PC-9 (cell line): ENCODE measurements at regions of chr3 and their contacts with region 1.

Region 1: DNA sequence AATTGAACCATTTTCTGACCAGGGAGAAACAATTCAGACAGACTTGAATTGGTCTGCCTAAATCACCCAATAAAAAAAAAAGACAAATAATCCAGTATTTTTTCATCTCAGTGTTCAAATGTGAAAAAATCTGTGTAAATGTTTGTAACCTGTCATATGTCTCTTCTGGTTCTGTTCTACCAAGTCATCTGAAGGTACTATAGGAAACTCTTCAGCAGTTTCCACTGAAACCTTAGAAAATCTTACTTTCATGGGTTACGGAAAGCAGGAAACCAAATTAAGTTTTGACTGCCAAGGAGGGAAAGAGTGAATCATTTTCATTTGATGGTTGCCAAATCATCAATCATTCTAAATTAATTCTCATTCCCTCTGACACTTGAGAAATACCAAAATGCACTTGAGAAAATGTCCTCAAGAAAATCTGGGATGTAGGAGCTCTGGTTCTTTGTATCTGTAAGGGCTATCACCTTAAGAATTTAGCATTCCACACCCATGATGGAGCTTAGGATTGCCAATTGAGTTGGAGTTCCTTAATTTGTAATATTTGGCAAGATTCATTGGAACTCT is 278.2 kb upstream of the KCNH8 start:
- DNase-seq: no peak
- H3K4me3 ChIP-seq: no peak overlapping the region
- H3K27ac ChIP-seq: no peak overlapping the region
- H3K4me1 ChIP-seq: 0 out of 2 replicates have a peak, but pooled peaks cover 6% of the 10 kb centered on the region
- H3K27me3 ChIP-seq: no peaks in the 10 kb centered on the region
- CTCF ChIP-seq: no peak

Region 2: DNA sequence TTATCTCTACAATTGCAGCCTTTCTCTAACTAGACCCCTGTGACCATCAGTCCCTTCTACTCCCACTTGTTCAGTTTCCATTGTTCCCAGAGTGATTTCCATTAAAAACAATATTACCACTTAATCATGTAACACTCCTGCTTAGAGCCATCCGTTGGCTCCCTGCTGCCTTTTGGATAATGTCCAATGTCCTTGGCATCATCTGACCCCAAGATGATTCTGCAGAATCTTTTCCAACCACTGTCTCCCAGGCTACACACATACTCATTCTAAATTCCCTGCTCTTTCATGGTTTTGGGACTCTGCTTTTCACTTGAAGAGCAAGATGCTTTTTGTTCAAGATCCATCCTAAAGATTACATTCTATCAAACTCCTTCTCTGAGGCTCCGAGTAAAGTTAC is 285.2 kb after region 1 on chr3:
- CTCF ChIA-PET with region 1: no interaction called
- POLR2A ChIA-PET with region 1: no interaction called
- intact Hi-C with region 1: no loop called
- DNase-seq: no peak
- H3K4me3 ChIP-seq: no peak overlapping the region
- H3K27ac ChIP-seq: no peak overlapping the region
- H3K4me1 ChIP-seq: no peaks in the 10 kb centered on the region
- H3K27me3 ChIP-seq: no peaks in the 10 kb centered on the region
- CTCF ChIP-seq: no peak

Region 3: GRCh38 chr3:19476281-19476680 is 606.1 kb after region 1 on chr3:
- CTCF ChIA-PET with region 1: no interaction called
- POLR2A ChIA-PET with region 1: interaction called, 11 read pairs
- intact Hi-C with region 1: no loop called
- DNase-seq: no peak
- H3K4me3 ChIP-seq: no peak overlapping the region
- H3K27ac ChIP-seq: no peak overlapping the region
- H3K4me1 ChIP-seq: no peaks in the 10 kb centered on the region
- H3K27me3 ChIP-seq: no peaks in the 10 kb centered on the region
- CTCF ChIP-seq: no peak